Activated CD4-positive, alpha-beta memory T cell treated with anti-CD3 and anti-CD28 coated beads for 36 hours (primary cell): ENCODE measurements at regions of chrX and their contacts with region 1.

Region 1: DNA sequence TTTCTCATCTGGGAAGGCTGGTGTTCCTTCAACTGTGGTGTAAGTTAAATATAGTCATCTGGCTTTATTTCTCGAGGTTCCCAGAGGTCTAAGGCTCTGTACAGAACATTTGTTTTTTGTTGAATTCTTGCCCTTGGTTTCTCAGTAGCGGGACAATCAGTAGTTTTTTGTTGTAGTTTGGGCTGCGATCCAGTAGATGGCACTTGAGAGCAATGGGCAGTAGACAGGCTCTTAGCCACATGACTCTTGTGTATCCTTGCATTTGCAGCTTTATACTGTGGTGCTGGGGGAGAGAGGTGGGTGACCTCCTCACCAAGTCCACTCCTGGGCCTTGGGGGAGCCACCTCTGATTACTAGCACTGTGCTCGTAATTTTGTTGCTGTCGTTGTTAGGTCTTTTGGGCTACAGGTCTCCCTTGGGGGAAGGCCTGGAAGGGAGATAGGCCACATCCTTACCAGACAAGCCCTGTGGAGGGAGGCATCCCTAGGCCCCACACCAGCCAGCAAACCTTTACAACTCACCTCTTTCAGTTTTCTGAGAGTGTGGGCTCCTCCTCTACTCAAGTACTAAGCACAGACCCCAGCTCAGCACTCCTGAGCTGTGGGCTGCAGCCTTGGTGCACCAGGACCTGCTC is 8.1 kb downstream of the ETDB start:
- DNase-seq: peak; percentile 44
- H3K4me3 Mint-ChIP-seq: no peak overlapping the region
- H3K27ac Mint-ChIP-seq: peak overlapping the region; percentile 11
- H3K4me1 Mint-ChIP-seq: no peaks in the 10 kb centered on the region
- H3K27me3 Mint-ChIP-seq: peaks cover 12% of the 10 kb centered on the region

Region 2: GRCh38 chrX:134443020-134443419 is 669.2 kb before region 1 on chrX:
- CTCF ChIA-PET with region 1: no interaction called
- POLR2A ChIA-PET with region 1: no interaction called
- intact Hi-C with region 1: no loop called
- DNase-seq: no peak
- H3K4me3 Mint-ChIP-seq: no peak overlapping the region
- H3K27ac Mint-ChIP-seq: no peak overlapping the region
- H3K4me1 Mint-ChIP-seq: no peaks in the 10 kb centered on the region
- H3K27me3 Mint-ChIP-seq: no peaks in the 10 kb centered on the region

Region 3: DNA sequence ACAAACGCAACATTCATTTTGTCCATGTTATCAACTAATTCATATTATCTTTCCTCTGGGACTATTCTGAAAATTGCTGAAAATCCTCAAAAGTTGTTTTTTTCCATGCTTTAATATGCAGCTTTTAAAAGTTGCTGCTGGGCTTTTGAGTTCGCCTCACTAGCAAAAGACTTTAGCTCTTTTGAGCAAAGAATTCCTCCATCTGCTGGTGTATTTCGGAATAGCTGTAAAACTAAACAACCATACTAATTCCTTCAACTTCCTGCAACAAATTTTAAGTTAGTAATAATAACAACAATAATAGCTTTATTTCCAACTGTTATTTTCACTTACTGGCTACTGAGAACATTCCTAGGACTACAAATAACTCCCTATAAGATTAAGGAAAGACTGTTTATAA is 329.4 kb before region 1 on chrX:
- CTCF ChIA-PET with region 1: no interaction called
- POLR2A ChIA-PET with region 1: no interaction called
- intact Hi-C with region 1: no loop called
- DNase-seq: no peak
- H3K4me3 Mint-ChIP-seq: no peak overlapping the region
- H3K27ac Mint-ChIP-seq: no peak overlapping the region
- H3K4me1 Mint-ChIP-seq: peaks cover 2% of the 10 kb centered on the region
- H3K27me3 Mint-ChIP-seq: no peaks in the 10 kb centered on the region

Region 4: GRCh38 chrX:135185795-135186443 is 73.7 kb after region 1 on chrX:
- CTCF ChIA-PET with region 1: interaction called, 36 read pairs
- POLR2A ChIA-PET with region 1: no interaction called
- intact Hi-C with region 1: no loop called
- DNase-seq: peak; percentile 39
- H3K4me3 Mint-ChIP-seq: no peak overlapping the region
- H3K27ac Mint-ChIP-seq: no peak overlapping the region
- H3K4me1 Mint-ChIP-seq: no peaks in the 10 kb centered on the region
- H3K27me3 Mint-ChIP-seq: peaks cover 4% of the 10 kb centered on the region